ENCODE measurements at regions of chr9 and their contacts with region 1.

Region 1: GRCh38 chr9:105148328-105149006 is 96.0 kb upstream of the SLC44A1 start:
- DNase-seq: no peak
- ATAC-seq: no peak
- H3K4me3 ChIP-seq: no peak overlapping the region
- H3K27ac ChIP-seq: no peak overlapping the region
- H3K4me1 ChIP-seq: no peaks in the 10 kb centered on the region
- H3K27me3 ChIP-seq: no peaks in the 10 kb centered on the region
- CTCF ChIP-seq: no peak
- POLR2A ChIP-seq: no peak

Region 2: GRCh38 chr9:104934691-104935500 is 213.6 kb before region 1 on chr9:
- intact Hi-C with region 1: loop called (anchors 5 kb)
- DNase-seq: no peak
- ATAC-seq: no peak
- H3K4me3 ChIP-seq: no peak overlapping the region
- H3K27ac ChIP-seq: no peak overlapping the region
- H3K4me1 ChIP-seq: no peaks in the 10 kb centered on the region
- H3K27me3 ChIP-seq: no peaks in the 10 kb centered on the region
- CTCF ChIP-seq: no peak
- POLR2A ChIP-seq: no peak

Measured in body of pancreas (tissue), 4 donors.